ENCODE measurements at regions of chr1 and their contacts with region 1.

Region 1: DNA sequence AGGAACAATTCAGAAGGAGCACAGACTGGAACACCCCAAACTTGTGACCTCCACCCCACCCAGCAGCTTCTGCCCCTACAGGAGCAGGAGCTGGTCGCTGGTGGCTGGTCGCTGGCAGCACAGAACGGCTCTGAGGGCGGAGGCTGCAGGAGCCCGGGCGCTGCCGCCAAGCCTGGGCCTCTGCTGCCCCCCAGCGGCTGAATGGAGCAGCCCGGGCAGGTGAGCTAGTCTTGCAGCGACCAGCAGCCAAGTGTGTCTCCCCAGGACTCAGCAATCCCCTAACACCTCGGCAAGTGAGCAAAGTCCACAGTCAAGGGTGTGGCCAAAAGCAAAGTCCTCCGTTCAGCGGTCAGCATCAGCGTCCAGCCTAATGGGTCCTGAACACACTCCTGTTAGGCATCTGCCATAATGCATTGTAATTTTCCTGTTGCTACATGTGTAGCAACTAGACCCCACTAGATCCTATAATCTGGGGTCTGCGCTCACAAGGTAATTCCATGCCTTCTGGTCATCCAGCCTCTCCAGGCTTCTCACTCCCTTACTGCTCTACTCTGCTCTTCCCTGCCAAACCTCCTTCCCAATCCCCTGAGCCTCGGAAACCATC is 12.1 kb upstream of the GJB5 start:
- DNase-seq: peak; percentile 63
- H3K4me3 ChIP-seq: no peak overlapping the region
- H3K27ac ChIP-seq: no peak overlapping the region
- H3K4me1 ChIP-seq: no peaks in the 10 kb centered on the region
- H3K27me3 ChIP-seq: no peaks in the 10 kb centered on the region
- CTCF ChIP-seq: peak; percentile 92 to 98

Region 2: GRCh38 chr1:34113887-34114286 is 628.9 kb before region 1 on chr1:
- CTCF ChIA-PET with region 1: no interaction called
- dilution Hi-C with region 1: no loop called
- in situ Hi-C with region 1: no loop called
- intact Hi-C with region 1: loop called (anchors 5 kb)
- DNase-seq: peak; percentile 1
- H3K4me3 ChIP-seq: no peak overlapping the region
- H3K27ac ChIP-seq: no peak overlapping the region
- H3K4me1 ChIP-seq: no peaks in the 10 kb centered on the region
- H3K27me3 ChIP-seq: no peaks in the 10 kb centered on the region
- CTCF ChIP-seq: peak in 1 of 2 donors; percentile 45

Region 3: GRCh38 chr1:34597877-34598514 is 144.8 kb before region 1 on chr1:
- CTCF ChIA-PET with region 1: no interaction called
- dilution Hi-C with region 1: no loop called
- in situ Hi-C with region 1: no loop called
- intact Hi-C with region 1: loop called (anchors 2 kb)
- DNase-seq: peak; percentile 42
- H3K4me3 ChIP-seq: no peak overlapping the region
- H3K27ac ChIP-seq: no peak overlapping the region
- H3K4me1 ChIP-seq: no peaks in the 10 kb centered on the region
- H3K27me3 ChIP-seq: no peaks in the 10 kb centered on the region
- CTCF ChIP-seq: peak; percentile 91 to 95

Region 4: DNA sequence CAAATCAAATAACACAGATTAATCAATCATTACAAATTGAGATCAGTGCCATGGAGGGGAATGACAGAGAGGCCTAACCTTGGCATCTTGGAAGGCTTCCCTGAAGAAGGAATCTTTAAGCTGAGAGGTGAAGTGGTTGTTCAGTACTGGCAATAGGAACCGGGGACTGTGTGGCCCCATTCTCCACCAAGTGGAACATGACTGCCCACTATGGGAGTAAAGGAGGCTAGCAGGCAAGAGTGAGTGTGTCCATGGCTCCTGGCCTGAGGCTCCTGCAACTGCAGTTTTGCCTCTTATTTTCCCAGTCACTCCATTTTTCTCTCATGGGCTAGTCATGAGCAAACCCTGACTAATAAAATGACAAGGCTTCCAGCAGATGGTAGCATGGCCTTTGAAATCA is 100.1 kb before region 1 on chr1:
- CTCF ChIA-PET with region 1: no interaction called
- dilution Hi-C with region 1: no loop called
- in situ Hi-C with region 1: no loop called
- intact Hi-C with region 1: no loop called
- DNase-seq: no peak
- H3K4me3 ChIP-seq: no peak overlapping the region
- H3K27ac ChIP-seq: no peak overlapping the region
- H3K4me1 ChIP-seq: no peaks in the 10 kb centered on the region
- H3K27me3 ChIP-seq: no peaks in the 10 kb centered on the region
- CTCF ChIP-seq: peak in 1 of 2 donors; percentile 13

Region 5: DNA sequence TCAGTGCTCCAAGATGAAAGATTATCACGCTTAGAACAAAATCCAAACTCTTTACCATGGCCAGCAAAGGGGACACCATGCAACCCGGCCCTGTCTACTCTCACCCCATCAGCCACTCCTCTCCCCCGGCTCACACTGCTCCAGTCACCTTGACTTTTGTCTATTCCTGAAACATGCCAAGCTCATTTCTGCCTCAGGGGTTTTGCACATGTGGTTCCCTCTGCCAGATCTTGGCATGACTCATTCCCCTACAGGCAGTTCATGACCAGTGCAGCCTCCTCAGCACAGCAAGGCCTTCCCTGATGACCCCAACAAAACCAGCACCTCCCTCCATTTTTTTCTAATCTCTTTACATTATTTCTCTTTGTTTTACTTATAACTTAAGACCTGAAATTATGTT is 46.6 kb before region 1 on chr1:
- CTCF ChIA-PET with region 1: no interaction called
- dilution Hi-C with region 1: no loop called
- in situ Hi-C with region 1: no loop called
- intact Hi-C with region 1: no loop called
- DNase-seq: peak; percentile 62
- H3K4me3 ChIP-seq: no peak overlapping the region
- H3K27ac ChIP-seq: no peak overlapping the region
- H3K4me1 ChIP-seq: peaks cover 4% of the 10 kb centered on the region
- H3K27me3 ChIP-seq: peaks cover 2% of the 10 kb centered on the region
- CTCF ChIP-seq: peak; percentile 24 to 33

Region 6: GRCh38 chr1:34763142-34763781 is 20.5 kb after region 1 on chr1:
- CTCF ChIA-PET with region 1: no interaction called
- dilution Hi-C with region 1: no loop called
- in situ Hi-C with region 1: no loop called
- intact Hi-C with region 1: no loop called
- DNase-seq: peak; percentile 91
- H3K4me3 ChIP-seq: peak overlapping the region in 1 of 3 experiments; percentile 2
- H3K27ac ChIP-seq: peak overlapping the region; percentile 81
- H3K4me1 ChIP-seq: peaks cover 53% of the 10 kb centered on the region
- H3K27me3 ChIP-seq: no peaks in the 10 kb centered on the region
- CTCF ChIP-seq: no peak

Region 7: GRCh38 chr1:34781071-34781843 is 38.5 kb after region 1 on chr1 and contains the start of gene GJB3:
- CTCF ChIA-PET with region 1: interaction called, 4 read pairs
- dilution Hi-C with region 1: no loop called
- in situ Hi-C with region 1: no loop called
- intact Hi-C with region 1: loop called (anchors 1 kb)
- DNase-seq: peak; percentile 66
- H3K4me3 ChIP-seq: peak within 1 kb of the TSS; percentile 82 to 89 (median 84)
- H3K27ac ChIP-seq: peak within 1 kb of the TSS; percentile 80
- H3K4me1 ChIP-seq: peaks cover 59% of the 10 kb centered on the region
- H3K27me3 ChIP-seq: no peaks in the 10 kb centered on the region
- CTCF ChIP-seq: no peak
- total RNA-seq, gene GJB3: 24.8 to 188 TPM

Measured in mammary epithelial cell (primary cell).